ENCODE measurements at regions of chr1 and their contacts with region 1.

Region 1: DNA sequence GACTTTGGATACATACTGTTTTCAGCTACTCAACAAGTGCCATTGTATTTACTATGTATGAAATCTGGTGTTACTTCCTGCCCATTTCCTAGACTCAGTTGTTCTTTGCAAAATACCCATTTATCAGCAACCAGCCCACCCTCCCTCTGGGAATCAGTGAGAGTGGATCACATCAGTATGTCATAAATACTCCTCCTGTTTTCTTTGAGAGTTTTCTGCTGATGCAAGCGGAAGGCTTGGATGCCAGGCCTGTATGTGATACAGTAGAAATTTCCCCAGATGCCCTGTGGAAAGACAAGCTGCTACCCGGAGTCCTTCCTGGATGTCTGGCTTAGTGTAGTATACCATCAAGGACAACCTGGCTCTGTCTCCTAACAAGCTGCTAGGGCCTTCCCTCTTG is 2.4 kb upstream of the PTPRC start:
- DNase-seq: no peak
- H3K4me3 ChIP-seq: no peak overlapping the region
- H3K27ac ChIP-seq: no peak overlapping the region
- H3K4me1 ChIP-seq: peaks cover 1% of the 10 kb centered on the region
- H3K27me3 ChIP-seq: no peaks in the 10 kb centered on the region
- CTCF ChIP-seq: no peak
- POLR2A ChIP-seq: no peak

Region 2: GRCh38 chr1:198651650-198652400 is 15.4 kb after region 1 on chr1:
- CTCF ChIA-PET with region 1: no interaction called
- POLR2A ChIA-PET with region 1: no interaction called
- dilution Hi-C with region 1: no loop called
- intact Hi-C with region 1: loop called (anchors 2 kb)
- DNase-seq: no peak
- H3K4me3 ChIP-seq: no peak overlapping the region
- H3K27ac ChIP-seq: no peak overlapping the region
- H3K4me1 ChIP-seq: no peaks in the 10 kb centered on the region
- H3K27me3 ChIP-seq: no peaks in the 10 kb centered on the region
- CTCF ChIP-seq: no peak
- POLR2A ChIP-seq: no peak